Psoas muscle (tissue), 8 donors: ENCODE measurements at regions of chr2 and their contacts with region 1.

Region 1: GRCh38 chr2:26202981-26203490 is 30.1 kb downstream of the GAREM2 start:
- DNase-seq: no peak
- ATAC-seq: no peak
- H3K4me3 ChIP-seq: no peak overlapping the region
- H3K27ac ChIP-seq: no peak overlapping the region
- H3K4me1 ChIP-seq: no peaks in the 10 kb centered on the region
- H3K27me3 ChIP-seq: no peaks in the 10 kb centered on the region
- CTCF ChIP-seq: no peak

Region 2: GRCh38 chr2:26018176-26018716 is 184.8 kb before region 1 on chr2:
- intact Hi-C with region 1: no loop called
- DNase-seq: peak; percentile 82 to 92
- ATAC-seq: peak; percentile 99
- H3K4me3 ChIP-seq: no peak overlapping the region
- H3K27ac ChIP-seq: peak overlapping the region; percentile 88
- H3K4me1 ChIP-seq: peaks cover 27% of the 10 kb centered on the region
- H3K27me3 ChIP-seq: no peaks in the 10 kb centered on the region
- CTCF ChIP-seq: no peak

Region 3: DNA sequence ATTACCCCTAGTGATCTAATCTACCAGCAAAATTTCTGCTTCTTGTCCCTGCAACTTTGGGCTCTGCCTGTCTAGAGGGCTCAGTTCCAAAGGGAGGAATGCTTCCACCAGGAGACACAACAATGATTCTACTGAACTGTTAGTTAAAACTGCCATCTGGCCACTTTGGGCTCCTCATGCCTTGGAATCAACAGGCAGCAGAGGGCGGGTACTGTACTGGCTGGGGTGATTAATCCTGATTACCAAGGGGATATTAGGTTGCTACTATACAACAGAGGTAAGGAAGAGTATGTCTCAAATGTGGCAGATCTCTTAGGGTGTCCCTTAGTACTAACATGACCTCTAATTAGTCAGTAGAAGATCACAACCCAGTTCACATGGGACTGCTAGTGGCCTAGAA is 20.0 kb after region 1 on chr2:
- intact Hi-C with region 1: loop called in 1 of 2 experiments (anchors 2 kb)
- DNase-seq: no peak
- ATAC-seq: peak in 3 of 4 donors; percentile 8 to 50 (median 16)
- H3K4me3 ChIP-seq: no peak overlapping the region
- H3K27ac ChIP-seq: no peak overlapping the region
- H3K4me1 ChIP-seq: no peaks in the 10 kb centered on the region
- H3K27me3 ChIP-seq: no peaks in the 10 kb centered on the region
- CTCF ChIP-seq: no peak